H1 (cell line): ENCODE measurements at regions of chr18 and their contacts with region 1.

Region 1: GRCh38 chr18:47050468-47050867 is 15.0 kb upstream of the ELOA2 start:
- DNase-seq: no peak
- H3K4me3 ChIP-seq: no peak overlapping the region
- H3K27ac ChIP-seq: no peak overlapping the region
- H3K4me1 ChIP-seq: no peaks in the 10 kb centered on the region
- H3K27me3 ChIP-seq: no peaks in the 10 kb centered on the region; a peak in 1 of 7 replicates
- CTCF ChIP-seq: peak in 2 of 3 experiments; percentile 49 to 63; a peak in 2 of 4 replicates
- EP300 ChIP-seq: no peak
- POLR2A ChIP-seq: no peak
- RAD21 ChIP-seq: peak; percentile 63 to 68

Region 2: DNA sequence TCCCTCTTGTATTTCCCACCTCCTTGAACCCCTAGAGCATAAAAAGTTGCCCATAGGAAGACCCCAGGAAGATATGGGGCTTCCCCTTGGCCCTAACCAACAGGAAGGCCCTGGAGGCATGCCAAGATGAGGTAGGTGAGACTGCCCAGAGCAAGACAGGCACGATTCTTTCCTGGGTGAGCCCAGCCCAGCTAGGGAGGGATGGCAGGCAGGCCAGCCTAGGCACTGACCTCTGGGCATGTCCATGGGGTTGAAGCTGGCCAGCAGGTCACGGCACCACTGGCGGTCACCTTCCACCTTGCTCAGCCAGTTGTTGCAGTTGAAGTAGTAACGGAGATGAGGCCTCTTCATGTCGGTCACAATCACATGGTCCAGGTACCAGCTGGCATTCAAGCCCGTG is 411.1 kb before region 1 on chr18:
- CTCF ChIA-PET with region 1: no interaction called
- POLR2A ChIA-PET with region 1: no interaction called
- DNase-seq: no peak
- H3K4me3 ChIP-seq: no peak overlapping the region
- H3K27ac ChIP-seq: no peak overlapping the region
- H3K4me1 ChIP-seq: no peaks in the 10 kb centered on the region
- H3K27me3 ChIP-seq: no peaks in the 10 kb centered on the region
- CTCF ChIP-seq: no peak
- EP300 ChIP-seq: no peak
- POLR2A ChIP-seq: no peak
- RAD21 ChIP-seq: no peak

Region 3: DNA sequence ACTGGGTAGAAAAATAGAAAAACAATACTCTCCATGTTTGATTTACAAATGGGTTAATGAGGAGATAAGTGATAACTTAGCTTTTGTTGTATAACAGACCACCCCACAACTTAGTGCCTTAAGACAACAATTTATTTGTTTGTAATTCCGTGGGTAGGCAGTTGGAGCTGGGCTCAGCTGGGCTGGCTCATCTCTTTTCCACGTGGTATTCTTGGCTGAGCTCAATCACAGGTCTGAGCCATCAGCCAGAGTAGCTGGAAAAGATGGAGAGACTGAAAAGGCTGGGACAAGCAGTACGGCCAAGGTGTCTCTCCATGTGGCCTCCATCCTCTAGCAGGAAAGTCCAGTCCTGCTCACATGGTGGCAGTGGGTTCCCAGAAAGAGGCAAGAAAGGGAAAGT is 17.2 kb after region 1 on chr18:
- CTCF ChIA-PET with region 1: interaction called, 21 read pairs
- POLR2A ChIA-PET with region 1: no interaction called
- DNase-seq: no peak
- H3K4me3 ChIP-seq: no peak overlapping the region
- H3K27ac ChIP-seq: no peak overlapping the region
- H3K4me1 ChIP-seq: no peaks in the 10 kb centered on the region; a peak in 1 of 7 replicates
- H3K27me3 ChIP-seq: no peaks in the 10 kb centered on the region
- CTCF ChIP-seq: no peak
- EP300 ChIP-seq: no peak
- POLR2A ChIP-seq: no peak
- RAD21 ChIP-seq: no peak

Region 4: DNA sequence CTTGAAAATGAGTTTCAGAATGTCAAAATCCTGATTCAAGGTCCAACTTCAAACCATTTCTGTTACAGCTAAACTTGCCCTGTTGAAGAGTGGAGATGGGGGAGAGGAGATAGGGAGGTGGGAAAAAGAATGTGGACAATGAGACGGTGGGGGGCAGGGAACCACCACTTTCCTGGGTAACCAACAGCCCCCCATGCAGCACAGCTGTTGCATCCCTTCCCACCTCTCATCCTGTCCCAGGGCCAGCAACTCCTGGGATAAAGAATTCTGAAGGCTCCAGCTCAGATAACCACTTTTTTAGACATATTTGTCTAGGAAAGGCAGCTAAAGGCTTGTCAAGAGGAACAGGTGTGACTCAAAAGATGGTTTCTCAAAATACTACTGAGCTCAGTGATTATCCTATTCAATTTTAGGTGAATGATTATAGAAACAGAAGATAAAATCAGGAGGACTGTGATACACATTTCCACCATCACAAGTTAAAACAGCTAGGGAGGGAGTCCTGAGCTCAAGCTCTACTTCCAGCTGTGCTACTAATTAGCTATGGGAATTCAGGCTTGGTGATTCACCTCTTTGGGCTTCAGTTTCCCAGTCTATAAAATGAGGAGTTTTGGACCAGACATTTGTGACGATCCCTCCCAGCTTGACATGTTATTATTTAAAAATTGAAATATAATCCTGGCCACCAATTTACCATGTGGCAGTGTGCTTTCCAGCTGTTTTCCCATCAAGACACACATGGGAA is 63.5 kb after region 1 on chr18:
- CTCF ChIA-PET with region 1: interaction called, 10 read pairs
- POLR2A ChIA-PET with region 1: no interaction called
- DNase-seq: no peak
- H3K4me3 ChIP-seq: no peak overlapping the region
- H3K27ac ChIP-seq: no peak overlapping the region
- H3K4me1 ChIP-seq: peaks cover 5 to 23% (median 12%) of the 10 kb centered on the region in 4 experiments
- H3K27me3 ChIP-seq: no peaks in the 10 kb centered on the region
- CTCF ChIP-seq: no peak
- EP300 ChIP-seq: no peak
- POLR2A ChIP-seq: no peak
- RAD21 ChIP-seq: no peak